Esophagus muscularis mucosa (tissue), 4 donors: ENCODE measurements at regions of chr14 and their contacts with region 1.

Region 1: DNA sequence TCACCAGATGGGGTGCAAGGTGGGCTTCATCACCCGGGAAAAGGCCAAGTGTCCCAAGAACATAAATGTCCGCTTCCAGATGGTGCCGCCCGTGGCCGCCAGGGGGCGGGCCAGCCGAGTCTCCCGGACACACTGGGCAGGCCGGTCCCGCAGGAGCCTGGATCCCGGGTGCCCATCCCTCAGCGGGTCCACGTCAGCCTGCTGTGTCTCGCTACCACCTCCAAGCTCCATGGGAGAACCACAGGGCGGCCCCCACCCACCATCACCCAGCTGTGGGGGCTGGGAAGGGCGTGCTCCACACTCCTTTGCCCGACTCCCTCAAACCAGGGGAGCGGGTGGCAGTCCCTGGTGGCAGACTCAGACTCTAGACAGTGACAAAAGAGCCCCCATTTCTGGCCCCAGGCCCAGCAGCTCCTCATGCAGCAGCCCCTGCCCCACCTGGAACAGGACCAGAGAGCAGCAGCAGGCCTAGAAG is 22.0 kb upstream of the NUDT14 start:
- DNase-seq: no peak
- H3K4me3 ChIP-seq: no peak overlapping the region
- H3K27ac ChIP-seq: no peak overlapping the region
- H3K4me1 ChIP-seq: peaks cover 65 to 83% (median 69%) of the 10 kb centered on the region in 4 donors
- H3K27me3 ChIP-seq: peaks cover 0 to 46% (median 18%) of the 10 kb centered on the region in 4 donors
- CTCF ChIP-seq: peak; percentile 84 to 94 (median 90)
- EP300 ChIP-seq: no peak
- POLR2A ChIP-seq: no peak

Region 2: GRCh38 chr14:104940526-104941150 is 262.5 kb before region 1 on chr14:
- intact Hi-C with region 1: no loop called
- DNase-seq: no peak
- H3K4me3 ChIP-seq: no peak overlapping the region
- H3K27ac ChIP-seq: no peak overlapping the region
- H3K4me1 ChIP-seq: no peaks in the 10 kb centered on the region
- H3K27me3 ChIP-seq: no peaks in the 10 kb centered on the region
- CTCF ChIP-seq: no peak
- EP300 ChIP-seq: no peak
- POLR2A ChIP-seq: no peak

Region 3: DNA sequence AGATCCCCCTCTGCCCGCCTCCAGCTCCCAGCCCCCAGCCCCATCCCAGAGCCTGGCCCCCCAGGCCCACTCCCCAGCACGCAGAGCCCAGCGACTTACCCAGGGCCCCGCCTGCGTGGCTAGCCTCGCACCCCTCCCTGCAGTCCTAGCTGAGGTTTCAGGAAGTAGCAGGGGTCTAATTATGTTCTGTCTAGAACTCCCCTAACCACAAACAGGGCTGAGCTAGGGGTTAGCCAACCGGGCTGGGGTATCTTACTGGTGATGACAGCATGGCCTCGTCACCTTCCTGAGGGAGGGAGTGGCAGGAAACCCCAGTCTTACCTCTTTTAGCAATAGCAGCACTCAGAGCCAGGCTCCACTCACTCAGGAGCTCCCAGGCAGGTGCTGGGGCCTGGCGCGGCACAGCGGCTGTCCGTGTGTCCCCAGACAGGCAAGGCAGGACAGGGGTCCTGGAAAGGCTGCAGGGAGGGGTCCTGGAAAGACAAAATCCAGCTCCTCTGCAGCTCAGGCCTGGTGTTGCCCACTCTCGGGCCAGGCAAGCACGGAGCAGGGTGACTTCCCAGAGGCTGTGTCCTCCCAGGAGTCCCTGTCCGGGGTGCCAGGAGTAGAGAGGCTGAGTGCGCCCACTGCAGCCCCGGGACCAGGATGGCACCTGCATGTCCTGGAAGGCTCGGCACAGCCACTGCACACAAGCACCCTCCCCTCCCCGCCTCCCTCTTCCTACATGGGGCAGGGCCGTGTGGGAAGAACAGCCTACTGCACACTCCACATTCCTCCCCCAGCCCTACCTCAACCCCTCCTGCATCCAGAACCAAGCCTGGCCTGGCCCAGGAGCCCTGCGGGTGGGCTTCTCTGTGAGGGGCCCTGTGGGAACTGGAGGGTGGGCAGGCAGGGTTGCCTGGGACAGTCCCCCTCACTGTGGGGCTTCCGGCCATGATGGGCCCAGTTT is 137.5 kb before region 1 on chr14 and contains the start of gene GPR132:
- intact Hi-C with region 1: no loop called
- DNase-seq: no peak
- H3K4me3 ChIP-seq: peak within 1 kb of the TSS in 3 of 4 donors; percentile 30 to 45 (median 30)
- H3K27ac ChIP-seq: peak within 1 kb of the TSS; percentile 2 to 62 (median 25)
- H3K4me1 ChIP-seq: peaks cover 19 to 24% (median 21%) of the 10 kb centered on the region in 4 donors
- H3K27me3 ChIP-seq: peaks cover 0 to 54% (median 0%) of the 10 kb centered on the region in 4 donors
- CTCF ChIP-seq: no peak
- EP300 ChIP-seq: no peak
- POLR2A ChIP-seq: no peak
- total RNA-seq, gene GPR132: 1.2 to 8.0 (median 2.1) TPM

Region 4: DNA sequence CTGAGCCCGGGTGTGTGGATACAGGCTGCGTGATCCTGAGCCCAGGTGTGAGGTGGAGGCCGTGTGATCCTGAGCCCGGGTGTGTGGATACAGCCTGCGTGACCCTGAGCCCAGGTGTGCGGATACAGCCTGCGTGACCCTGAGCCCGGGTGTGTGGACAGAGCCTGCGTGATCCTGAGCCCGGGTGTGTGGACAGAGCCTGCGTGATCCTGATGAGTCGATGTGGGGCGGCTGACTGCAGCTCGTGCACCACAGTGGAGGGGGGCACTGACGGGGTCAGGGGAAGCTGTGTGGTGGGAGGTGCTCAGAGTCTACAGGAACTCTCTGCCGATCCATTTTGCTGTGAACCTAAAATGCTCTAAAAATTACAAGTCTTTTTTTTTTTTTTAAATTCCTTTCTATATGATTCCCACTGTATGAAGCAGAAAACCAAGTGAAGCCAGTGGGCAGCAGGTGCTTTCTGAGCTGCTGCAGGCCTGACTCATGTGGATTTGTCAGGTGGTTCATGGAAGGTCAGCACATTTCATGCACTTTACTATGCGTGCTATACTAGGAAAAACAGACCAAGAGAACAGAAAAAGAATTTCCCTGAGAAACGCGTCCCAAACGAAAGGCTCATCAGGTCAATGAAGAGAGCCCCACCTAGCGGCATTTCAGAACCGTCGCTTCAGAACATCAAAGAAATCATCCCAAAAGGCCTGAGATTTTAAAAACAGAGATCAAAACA is 78.4 kb after region 1 on chr14:
- intact Hi-C with region 1: loop called (anchors 5 kb)
- DNase-seq: no peak
- H3K4me3 ChIP-seq: no peak overlapping the region
- H3K27ac ChIP-seq: no peak overlapping the region
- H3K4me1 ChIP-seq: peaks cover 5 to 28% (median 23%) of the 10 kb centered on the region in 4 donors
- H3K27me3 ChIP-seq: no peaks in the 10 kb centered on the region
- CTCF ChIP-seq: peak; percentile 54 to 62 (median 57)
- EP300 ChIP-seq: no peak
- POLR2A ChIP-seq: no peak